Activated B cell treated with CpG ODN at 0.5 μM for 24 hours (primary cell): ENCODE measurements at regions of chr2 and their contacts with region 1.

Region 1: DNA sequence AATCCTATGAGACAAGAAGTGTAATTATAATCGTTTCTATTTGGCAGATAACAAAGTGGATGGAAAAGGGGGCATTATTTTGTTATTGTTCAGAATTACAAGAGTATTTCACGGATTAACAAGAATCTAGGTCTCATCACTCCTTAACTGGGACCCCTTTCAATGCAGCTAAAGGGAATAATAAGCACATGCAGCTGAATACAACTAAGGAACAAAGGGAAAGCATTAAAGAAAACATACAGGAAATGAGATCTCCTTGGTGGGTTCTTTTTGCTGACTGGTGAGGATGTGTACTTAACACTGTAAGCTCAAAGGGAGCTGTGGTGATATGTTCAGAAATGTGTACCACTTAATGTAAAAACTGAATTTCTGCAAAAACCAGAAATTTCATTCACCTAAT is 140.5 kb upstream of the WDSUB1 start:
- DNase-seq: no peak
- ATAC-seq: no peak
- H3K4me3 Mint-ChIP-seq: no peak overlapping the region
- H3K27ac Mint-ChIP-seq: no peak overlapping the region
- H3K4me1 Mint-ChIP-seq: no peaks in the 10 kb centered on the region
- H3K27me3 Mint-ChIP-seq: no peaks in the 10 kb centered on the region
- CTCF ChIP-seq: no peak

Region 2: DNA sequence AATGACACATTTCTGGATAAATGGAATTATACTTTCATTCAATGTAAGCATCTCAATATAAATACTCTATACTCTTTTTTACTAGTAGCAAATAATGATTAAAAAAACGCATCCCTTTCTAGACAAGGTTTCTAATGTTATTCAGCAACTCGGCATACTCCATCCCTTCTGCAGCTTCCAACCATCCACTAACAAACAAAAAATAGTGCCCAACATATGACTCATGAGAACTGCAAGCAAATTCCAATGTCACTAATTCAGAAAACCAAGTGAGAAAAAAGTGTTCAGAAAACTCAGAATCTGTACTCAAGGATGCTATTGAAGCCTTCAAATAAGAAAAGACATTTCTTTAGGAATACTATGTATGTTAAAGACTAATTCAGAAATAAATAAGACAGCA is 49.3 kb after region 1 on chr2:
- CTCF ChIA-PET with region 1: no interaction called
- POLR2A ChIA-PET with region 1: no interaction called
- intact Hi-C with region 1: loop called (anchors 1 kb)
- DNase-seq: no peak
- ATAC-seq: no peak
- H3K4me3 Mint-ChIP-seq: no peak overlapping the region
- H3K27ac Mint-ChIP-seq: no peak overlapping the region
- H3K4me1 Mint-ChIP-seq: no peaks in the 10 kb centered on the region
- H3K27me3 Mint-ChIP-seq: no peaks in the 10 kb centered on the region
- CTCF ChIP-seq: no peak